Activated CD4-positive, alpha-beta memory T cell treated with anti-CD3 and anti-CD28 coated beads, Interleukin-2, amount 10 ng/mL, durations not matched to agents 7 days and 5 days (primary cell): ENCODE measurements at regions of chr7 and their contacts with region 1.

Region 1: GRCh38 chr7:33109005-33109757 is at the start of gene RP9:
- DNase-seq: peak; percentile 80
- H3K4me3 Mint-ChIP-seq: peak within 1 kb of the TSS; percentile 83
- H3K27ac Mint-ChIP-seq: peak within 1 kb of the TSS; percentile 54
- H3K4me1 Mint-ChIP-seq: peaks cover 31% of the 10 kb centered on the region
- H3K27me3 Mint-ChIP-seq: peaks cover 19% of the 10 kb centered on the region
- total RNA-seq, gene RP9: 9.7 to 11.5 TPM

Region 2: DNA sequence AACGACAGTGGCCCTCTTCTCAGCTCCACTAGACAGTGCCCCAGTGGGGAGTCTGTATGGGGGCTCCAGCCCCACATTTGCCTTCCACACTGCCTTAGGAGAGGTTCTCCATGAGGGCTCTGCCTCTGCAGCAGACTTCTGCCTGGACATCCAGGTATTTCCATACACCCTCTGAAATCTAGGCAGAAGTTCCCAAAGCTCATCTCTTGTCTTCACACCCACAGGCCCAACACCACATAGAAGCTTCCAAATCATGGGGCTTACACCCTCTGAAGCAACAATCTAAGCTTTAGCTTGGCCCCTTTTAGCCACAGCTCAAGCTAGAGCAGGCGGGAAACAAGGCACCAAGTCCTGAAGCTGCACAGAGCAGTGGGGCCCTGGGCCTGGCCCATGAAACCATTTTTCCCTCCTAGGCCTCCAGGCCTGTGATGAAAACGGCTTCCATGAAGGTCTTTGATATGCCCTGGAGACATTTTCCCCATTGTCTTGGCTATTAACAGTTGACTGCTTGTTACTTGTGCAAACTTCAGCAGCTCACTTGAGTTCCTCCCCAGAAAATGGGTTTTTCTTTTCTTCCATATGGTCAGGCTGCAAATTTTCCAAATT is 306.8 kb before region 1 on chr7:
- CTCF ChIA-PET with region 1: interaction called, 29 read pairs
- POLR2A ChIA-PET with region 1: no interaction called
- DNase-seq: no peak
- H3K4me3 Mint-ChIP-seq: no peak overlapping the region
- H3K27ac Mint-ChIP-seq: no peak overlapping the region
- H3K4me1 Mint-ChIP-seq: no peaks in the 10 kb centered on the region
- H3K27me3 Mint-ChIP-seq: peaks cover 4% of the 10 kb centered on the region

Region 3: GRCh38 chr7:32905175-32905662 is 204.0 kb before region 1 on chr7:
- CTCF ChIA-PET with region 1: interaction called, 10 read pairs
- POLR2A ChIA-PET with region 1: interaction called, 3 read pairs
- DNase-seq: peak; percentile 90
- H3K4me3 Mint-ChIP-seq: peak overlapping the region; percentile 75
- H3K27ac Mint-ChIP-seq: peak overlapping the region; percentile 95
- H3K4me1 Mint-ChIP-seq: peaks cover 19% of the 10 kb centered on the region
- H3K27me3 Mint-ChIP-seq: no peaks in the 10 kb centered on the region

Region 4: GRCh38 chr7:33035776-33036175 is 73.4 kb before region 1 on chr7:
- CTCF ChIA-PET with region 1: interaction called, 12 read pairs
- POLR2A ChIA-PET with region 1: interaction called, 3 read pairs
- DNase-seq: no peak
- H3K4me3 Mint-ChIP-seq: no peak overlapping the region
- H3K27ac Mint-ChIP-seq: no peak overlapping the region
- H3K4me1 Mint-ChIP-seq: peaks cover 39% of the 10 kb centered on the region
- H3K27me3 Mint-ChIP-seq: no peaks in the 10 kb centered on the region

Region 5: DNA sequence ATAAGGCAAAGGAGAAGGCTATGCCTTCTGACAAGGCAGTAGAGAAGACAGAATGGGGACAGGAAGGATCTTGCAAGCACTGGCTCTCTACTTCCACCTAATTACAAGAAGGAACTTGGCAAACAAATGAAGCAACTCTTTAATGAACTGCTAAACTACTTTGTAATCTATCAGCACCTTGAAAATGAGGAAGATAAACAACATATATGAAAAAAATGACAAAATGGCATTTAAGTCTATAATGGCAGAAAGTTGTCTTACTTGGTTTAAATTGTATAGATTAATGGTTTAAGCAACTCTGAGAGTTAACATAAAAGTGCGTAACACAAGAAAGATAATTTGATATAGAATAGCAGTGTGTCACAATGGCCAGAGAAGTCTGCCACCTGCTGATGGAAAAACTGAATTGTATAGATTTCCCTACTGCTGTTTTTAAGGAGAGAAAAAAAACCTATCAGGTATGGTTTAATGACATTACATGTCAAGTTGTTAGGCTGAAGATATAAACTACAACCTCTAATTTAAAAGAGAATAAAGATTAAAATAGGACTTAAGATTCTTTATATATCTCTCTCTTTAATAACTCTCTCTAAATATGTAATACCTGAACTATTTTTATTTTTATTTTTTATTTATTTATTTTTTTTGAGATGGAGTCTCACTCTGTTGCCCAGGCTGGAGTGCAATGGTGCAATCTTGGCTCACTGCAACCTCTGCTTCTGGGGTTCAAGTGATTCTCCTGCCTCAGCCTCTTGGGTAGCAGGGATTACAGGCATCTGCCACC is 58.5 kb before region 1 on chr7:
- CTCF ChIA-PET with region 1: interaction called, 11 read pairs
- POLR2A ChIA-PET with region 1: interaction called, 3 read pairs
- DNase-seq: no peak
- H3K4me3 Mint-ChIP-seq: no peak overlapping the region
- H3K27ac Mint-ChIP-seq: no peak overlapping the region
- H3K4me1 Mint-ChIP-seq: peaks cover 49% of the 10 kb centered on the region
- H3K27me3 Mint-ChIP-seq: no peaks in the 10 kb centered on the region

Region 6: GRCh38 chr7:33128990-33129805 is 20.0 kb after region 1 on chr7 and contains the start of gene BBS9:
- CTCF ChIA-PET with region 1: interaction called, 10 read pairs
- POLR2A ChIA-PET with region 1: no interaction called
- DNase-seq: peak; percentile 93
- H3K4me3 Mint-ChIP-seq: peak within 1 kb of the TSS; percentile 90
- H3K27ac Mint-ChIP-seq: peak within 1 kb of the TSS; percentile 72
- H3K4me1 Mint-ChIP-seq: peaks cover 21% of the 10 kb centered on the region
- H3K27me3 Mint-ChIP-seq: peaks cover 3% of the 10 kb centered on the region
- total RNA-seq, gene BBS9: 13.7 to 14.0 TPM